ENCODE measurements at regions of chr3 and their contacts with region 1.

Region 1: DNA sequence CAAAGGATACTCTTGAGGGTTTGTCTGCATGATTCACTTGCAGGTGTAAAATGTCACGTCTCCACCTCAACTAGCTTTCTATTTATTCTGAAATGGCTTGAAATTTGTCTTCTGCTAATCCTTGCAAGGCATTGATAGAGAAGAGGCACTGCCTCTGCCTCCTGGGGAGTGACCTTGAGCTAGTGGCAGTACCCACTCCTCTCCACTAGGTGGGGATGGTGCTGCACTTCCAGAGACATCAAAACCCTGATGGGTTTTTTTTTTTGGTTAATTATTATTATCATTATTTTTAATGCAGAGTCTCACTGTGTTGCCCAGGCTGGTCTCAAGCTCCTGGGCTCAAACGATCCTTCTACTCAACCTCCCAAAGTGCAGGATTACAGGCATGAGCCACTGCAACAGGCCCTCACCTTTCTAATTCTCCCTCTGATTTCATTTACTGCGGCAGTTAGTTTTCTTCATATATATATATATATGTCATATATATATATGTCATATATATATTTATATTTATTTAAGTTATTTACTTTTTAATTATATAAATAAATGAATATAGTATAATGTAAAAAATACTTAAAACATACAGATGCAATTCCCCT is 117.6 kb upstream of the EIF1B start:
- DNase-seq: peak; percentile 40 to 41
- ATAC-seq: peak; percentile 71 to 80
- H3K4me3 ChIP-seq: no peak overlapping the region
- H3K27ac ChIP-seq: no peak overlapping the region
- H3K4me1 ChIP-seq: no peaks in the 10 kb centered on the region
- CTCF ChIP-seq: peak; percentile 62
- EP300 ChIP-seq: no peak
- POLR2A ChIP-seq: no peak
- RAD21 ChIP-seq: peak; percentile 60 to 76

Region 2: DNA sequence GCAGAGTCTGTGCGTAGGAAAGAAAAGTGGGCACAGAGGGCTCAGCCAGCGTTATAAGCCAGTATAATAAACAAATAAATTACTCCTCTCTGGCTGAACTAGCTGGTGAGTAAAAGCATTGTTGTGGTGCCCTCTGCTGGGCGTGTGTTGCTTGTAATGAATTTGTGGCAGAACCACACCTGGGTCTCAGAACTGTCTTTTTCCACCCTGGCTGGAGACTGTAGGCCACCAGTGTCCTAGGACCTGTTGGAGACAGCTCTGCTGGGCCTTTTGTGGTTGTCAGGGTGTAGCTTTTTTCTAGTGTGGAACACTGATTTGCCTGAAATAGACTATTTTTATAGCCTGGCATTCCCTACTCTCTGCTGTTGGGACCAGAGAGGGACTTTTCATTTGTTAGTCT is 12.9 kb before region 1 on chr3:
- CTCF ChIA-PET with region 1: interaction called, 60 read pairs
- POLR2A ChIA-PET with region 1: no interaction called
- DNase-seq: peak; percentile 31 to 55
- ATAC-seq: peak; percentile 77 to 91; a peak in 5 of 6 replicates
- H3K4me3 ChIP-seq: no peak overlapping the region
- H3K27ac ChIP-seq: no peak overlapping the region
- H3K4me1 ChIP-seq: no peaks in the 10 kb centered on the region
- CTCF ChIP-seq: peak; percentile 72
- EP300 ChIP-seq: no peak
- POLR2A ChIP-seq: no peak
- RAD21 ChIP-seq: peak; percentile 75 to 82

Region 3: DNA sequence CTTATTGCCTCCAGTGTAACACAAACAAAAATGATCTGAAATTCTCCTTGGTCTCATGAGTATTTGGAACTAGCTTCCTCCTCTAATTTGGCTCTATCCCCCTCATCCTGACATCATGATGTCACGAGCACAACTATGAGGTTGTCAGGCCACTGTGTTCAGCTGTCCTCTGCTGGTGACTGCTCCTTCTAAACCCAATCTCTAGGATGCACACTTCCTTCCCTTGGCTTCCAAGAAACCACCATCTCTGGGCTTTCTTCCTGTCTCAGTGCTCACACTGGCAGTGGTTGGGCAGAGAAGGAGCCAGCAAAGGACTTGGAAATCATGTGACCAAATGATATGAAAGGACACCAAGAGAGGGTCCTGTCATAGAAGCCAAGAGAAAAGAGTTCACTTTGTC is 86.8 kb after region 1 on chr3:
- CTCF ChIA-PET with region 1: no interaction called
- POLR2A ChIA-PET with region 1: no interaction called
- DNase-seq: no peak
- ATAC-seq: no peak
- H3K4me3 ChIP-seq: no peak overlapping the region
- H3K27ac ChIP-seq: no peak overlapping the region
- H3K4me1 ChIP-seq: no peaks in the 10 kb centered on the region
- CTCF ChIP-seq: no peak
- EP300 ChIP-seq: no peak
- POLR2A ChIP-seq: no peak
- RAD21 ChIP-seq: no peak

Region 4: GRCh38 chr3:40309925-40310695 is 118.2 kb after region 1 on chr3:
- CTCF ChIA-PET with region 1: interaction called, 40 read pairs
- POLR2A ChIA-PET with region 1: interaction called, 8 read pairs
- DNase-seq: peak in 1 of 2 experiments; percentile 5
- ATAC-seq: peak; percentile 69 to 72
- H3K4me3 ChIP-seq: peak overlapping the region; percentile 78
- H3K27ac ChIP-seq: peak overlapping the region; percentile 87 to 93
- H3K4me1 ChIP-seq: peaks cover 6% of the 10 kb centered on the region; the same call in 2 of the 3 replicates
- CTCF ChIP-seq: no peak
- EP300 ChIP-seq: no peak
- POLR2A ChIP-seq: no peak
- RAD21 ChIP-seq: no peak

Region 5: GRCh38 chr3:40317061-40317855 is 125.3 kb after region 1 on chr3:
- CTCF ChIA-PET with region 1: interaction called, 40 read pairs
- POLR2A ChIA-PET with region 1: interaction called, 3 read pairs
- DNase-seq: peak; percentile 31 to 58
- ATAC-seq: peak; percentile 70 to 90; a peak in 4 of 6 replicates
- H3K4me3 ChIP-seq: no peak overlapping the region
- H3K27ac ChIP-seq: no peak overlapping the region
- H3K4me1 ChIP-seq: no peaks in the 10 kb centered on the region
- CTCF ChIP-seq: peak; percentile 67
- EP300 ChIP-seq: no peak
- POLR2A ChIP-seq: no peak
- RAD21 ChIP-seq: peak; percentile 71 to 77